CD4-positive, alpha-beta T cell (primary cell): ENCODE measurements at regions of chr14 and their contacts with region 1.

Region 1: GRCh38 chr14:91516663-91517388 is 6.7 kb upstream of the PPP4R3A start:
- DNase-seq: no peak
- ATAC-seq: no peak
- H3K4me3 ChIP-seq: no peak overlapping the region
- H3K4me3 Mint-ChIP-seq: no peak overlapping the region
- H3K27ac ChIP-seq: no peak overlapping the region
- H3K27ac Mint-ChIP-seq: no peak overlapping the region
- H3K4me1 ChIP-seq: no peaks in the 10 kb centered on the region
- H3K4me1 Mint-ChIP-seq: no peaks in the 10 kb centered on the region
- H3K27me3 ChIP-seq: no peaks in the 10 kb centered on the region
- H3K27me3 Mint-ChIP-seq: no peaks in the 10 kb centered on the region
- CTCF ChIP-seq: no peak

Region 2: DNA sequence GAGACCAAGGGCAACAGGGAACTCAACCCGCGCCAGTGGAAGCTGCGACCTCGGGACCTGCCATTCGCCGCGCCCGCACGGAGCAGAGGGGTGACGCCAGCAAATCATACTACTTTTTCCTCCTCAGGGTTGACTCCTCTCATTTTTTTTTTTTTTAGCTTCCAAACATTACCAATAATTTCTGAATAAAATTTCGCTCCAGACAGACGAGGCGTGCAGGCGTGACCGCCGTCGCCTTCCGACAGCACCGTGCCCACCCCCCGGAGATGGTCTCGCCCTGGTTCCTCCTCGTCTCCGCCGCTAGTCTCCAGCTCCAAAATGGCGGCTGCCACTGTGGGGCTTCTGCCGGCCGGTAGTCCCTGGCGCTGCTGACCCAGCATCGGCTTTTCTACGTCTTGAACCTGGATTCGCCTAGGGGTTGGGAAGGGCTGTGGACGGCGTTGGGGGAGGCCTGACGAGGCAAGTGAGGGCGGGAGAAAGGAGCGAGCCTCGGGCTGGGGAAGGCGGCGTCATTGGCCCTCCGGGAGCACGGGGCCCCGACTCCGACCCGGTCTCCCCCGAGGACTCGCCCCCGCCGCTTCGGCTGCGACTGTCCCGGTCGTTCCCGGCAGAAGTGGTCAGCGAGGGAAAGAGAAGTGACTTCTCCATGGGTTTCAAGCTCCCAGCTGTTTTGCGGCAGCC is 605.0 kb after region 1 on chr14 and contains the starts of genes CPSF2 and NDUFB1:
- CTCF ChIA-PET with region 1: no interaction called
- POLR2A ChIA-PET with region 1: no interaction called
- intact Hi-C with region 1: loop called in 1 of 2 experiments (anchors 5 kb)
- DNase-seq: peak; percentile 74 to 91 (median 82)
- ATAC-seq: peak; percentile 87
- H3K4me3 ChIP-seq: peak within 1 kb of the TSS; percentile 100
- H3K4me3 Mint-ChIP-seq: peak within 1 kb of the TSS; percentile 100
- H3K27ac ChIP-seq: peak within 1 kb of the TSS; percentile 84 to 93
- H3K27ac Mint-ChIP-seq: peak within 1 kb of the TSS; percentile 100
- H3K4me1 ChIP-seq: peaks cover 39% of the 10 kb centered on the region
- H3K4me1 Mint-ChIP-seq: peaks cover 59% of the 10 kb centered on the region
- H3K27me3 ChIP-seq: no peaks in the 10 kb centered on the region
- H3K27me3 Mint-ChIP-seq: no peaks in the 10 kb centered on the region
- CTCF ChIP-seq: no peak
- total RNA-seq, gene CPSF2: 12.4 to 12.9 TPM
- total RNA-seq, gene NDUFB1: 45.3 to 48.1 TPM